HEK293 (cell line): ENCODE measurements at regions of chr6 and their contacts with region 1.

Region 1: DNA sequence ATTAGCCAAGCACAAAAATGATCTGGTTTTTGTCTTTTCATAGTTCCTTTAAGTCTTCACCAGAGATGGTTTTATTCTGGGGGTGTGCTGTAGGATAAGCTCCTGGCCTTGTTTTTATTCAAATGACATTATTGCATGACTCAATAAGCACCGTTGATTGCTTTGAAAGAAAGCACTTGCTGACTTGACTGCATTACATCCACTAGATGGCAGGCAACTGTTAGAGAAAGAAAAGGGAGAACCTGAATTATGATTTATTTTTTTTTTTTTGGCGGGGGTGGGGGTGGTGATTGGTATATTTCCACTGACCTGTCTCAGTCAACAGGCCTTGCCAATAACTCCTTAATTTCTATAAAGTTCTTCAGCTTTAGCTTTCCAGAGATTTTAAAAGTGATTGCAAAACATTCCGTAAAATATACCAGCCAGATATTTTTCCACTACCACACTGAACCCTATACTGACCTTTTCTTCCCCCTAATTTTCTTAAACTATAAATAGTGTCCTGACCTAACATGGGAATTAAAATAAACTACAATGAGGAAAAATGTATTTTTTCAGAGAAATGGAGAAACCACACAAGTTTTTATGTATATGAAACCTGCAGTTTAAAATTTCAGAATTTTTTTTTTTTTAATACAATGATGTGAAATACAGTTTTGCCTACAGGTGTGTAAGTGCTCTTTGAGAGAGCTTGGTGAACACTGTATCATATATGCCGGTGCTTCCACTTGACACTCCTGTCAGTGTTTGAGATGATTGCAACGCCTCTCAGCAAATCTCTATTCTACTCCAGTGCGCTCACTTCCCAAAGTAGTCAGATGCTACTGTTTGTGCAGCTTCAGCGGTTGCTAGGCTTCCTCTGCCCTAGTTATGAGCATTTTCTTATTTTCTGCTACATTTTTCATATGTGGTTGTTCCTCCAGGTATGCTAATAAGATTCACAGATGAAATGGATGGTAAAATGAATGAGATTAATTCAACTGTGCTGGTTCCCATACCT is 274.3 kb downstream of the CD109 start:
- H3K4me3 ChIP-seq: no peak overlapping the region
- H3K27ac ChIP-seq: no peak overlapping the region
- H3K4me1 ChIP-seq: no peaks in the 10 kb centered on the region
- CTCF ChIP-seq: no peak

Region 2: DNA sequence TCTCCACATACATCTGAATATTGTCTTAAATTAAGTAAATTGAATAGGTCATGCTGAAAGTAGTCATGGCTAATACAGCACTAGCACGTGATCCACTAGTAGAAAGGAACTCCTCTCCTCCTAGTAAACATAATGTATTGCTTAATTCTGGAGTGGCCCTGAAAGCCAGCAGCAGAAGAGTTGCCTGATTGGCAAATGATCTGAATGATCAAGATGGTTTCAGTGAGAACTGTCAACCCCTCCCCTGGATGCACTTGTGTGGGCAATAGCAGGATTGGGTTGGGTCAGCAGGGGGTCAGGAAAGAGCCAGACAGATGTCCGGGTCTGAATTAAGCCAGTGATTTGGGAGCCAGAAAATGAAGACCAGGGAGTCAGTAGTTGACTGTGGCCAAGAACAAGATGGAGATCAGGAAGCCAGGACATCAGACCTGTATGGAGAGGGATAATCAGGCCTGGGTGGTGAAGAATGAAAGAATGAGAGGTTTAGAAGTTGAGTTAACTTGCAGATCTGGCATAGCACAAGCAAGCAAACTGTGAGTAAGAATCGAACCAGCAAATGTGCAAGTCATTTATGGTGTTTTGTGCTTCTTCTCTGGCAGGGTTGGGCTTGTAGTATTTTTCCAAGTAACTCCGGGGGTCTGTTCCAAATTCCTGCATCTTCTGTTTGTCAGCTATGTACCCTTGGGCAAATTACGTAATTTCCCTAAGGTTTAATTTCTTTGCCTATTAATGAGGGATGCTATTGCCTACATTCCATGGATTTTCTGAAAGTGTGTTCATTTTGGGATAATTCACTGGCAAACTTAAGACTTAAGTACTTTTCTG is 30.6 kb after region 1 on chr6:
- CTCF ChIA-PET with region 1: interaction called, 15 read pairs
- POLR2A ChIA-PET with region 1: no interaction called
- H3K4me3 ChIP-seq: no peak overlapping the region
- H3K27ac ChIP-seq: no peak overlapping the region
- H3K4me1 ChIP-seq: no peaks in the 10 kb centered on the region
- CTCF ChIP-seq: no peak